ENCODE measurements at regions of chr22 and their contacts with region 1.

Region 1: GRCh38 chr22:37260901-37261336 is 16.9 kb upstream of the RAC2 start:
- DNase-seq: no peak
- H3K4me3 ChIP-seq: no peak overlapping the region
- CTCF ChIP-seq: peak; percentile 92

Region 2: DNA sequence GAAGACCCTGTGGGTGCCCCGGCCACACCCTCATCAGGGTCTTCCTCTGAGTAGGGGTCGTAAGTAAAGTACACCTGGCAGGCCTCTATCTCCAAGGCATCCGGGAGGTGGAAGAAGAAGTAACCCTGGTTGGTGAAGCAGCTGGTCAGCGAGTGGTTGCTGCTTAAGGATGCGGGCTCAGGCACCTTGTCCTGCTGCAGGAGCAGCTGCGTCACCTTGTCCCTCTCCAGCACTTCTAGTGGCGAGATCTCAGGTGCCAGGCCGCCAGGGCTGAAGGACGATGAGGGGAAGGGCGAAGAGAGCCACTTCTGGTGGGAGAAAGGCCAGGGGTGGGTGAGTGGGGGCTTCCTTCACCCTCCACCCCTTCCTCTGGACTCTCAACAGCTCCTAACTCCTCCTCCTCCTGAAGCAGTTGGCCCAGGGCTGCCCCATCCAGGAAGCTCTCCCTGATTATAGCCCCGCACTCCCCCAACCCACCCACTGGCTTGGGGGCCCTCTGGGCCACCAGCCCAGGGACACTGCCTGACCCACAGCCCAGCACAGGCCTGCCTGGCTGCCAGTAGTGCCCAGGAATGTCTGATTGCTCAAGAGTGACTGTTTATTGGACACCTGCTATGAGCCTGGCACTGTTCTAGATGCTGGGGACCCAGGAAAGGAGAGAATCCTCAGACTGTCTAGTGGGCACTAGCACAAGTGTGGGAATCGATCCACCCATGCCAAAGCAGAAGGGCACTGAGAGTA is 132.2 kb before region 1 on chr22:
- CTCF ChIA-PET with region 1: no interaction called
- POLR2A ChIA-PET with region 1: no interaction called
- DNase-seq: no peak
- H3K4me3 ChIP-seq: no peak overlapping the region
- CTCF ChIP-seq: no peak

Region 3: DNA sequence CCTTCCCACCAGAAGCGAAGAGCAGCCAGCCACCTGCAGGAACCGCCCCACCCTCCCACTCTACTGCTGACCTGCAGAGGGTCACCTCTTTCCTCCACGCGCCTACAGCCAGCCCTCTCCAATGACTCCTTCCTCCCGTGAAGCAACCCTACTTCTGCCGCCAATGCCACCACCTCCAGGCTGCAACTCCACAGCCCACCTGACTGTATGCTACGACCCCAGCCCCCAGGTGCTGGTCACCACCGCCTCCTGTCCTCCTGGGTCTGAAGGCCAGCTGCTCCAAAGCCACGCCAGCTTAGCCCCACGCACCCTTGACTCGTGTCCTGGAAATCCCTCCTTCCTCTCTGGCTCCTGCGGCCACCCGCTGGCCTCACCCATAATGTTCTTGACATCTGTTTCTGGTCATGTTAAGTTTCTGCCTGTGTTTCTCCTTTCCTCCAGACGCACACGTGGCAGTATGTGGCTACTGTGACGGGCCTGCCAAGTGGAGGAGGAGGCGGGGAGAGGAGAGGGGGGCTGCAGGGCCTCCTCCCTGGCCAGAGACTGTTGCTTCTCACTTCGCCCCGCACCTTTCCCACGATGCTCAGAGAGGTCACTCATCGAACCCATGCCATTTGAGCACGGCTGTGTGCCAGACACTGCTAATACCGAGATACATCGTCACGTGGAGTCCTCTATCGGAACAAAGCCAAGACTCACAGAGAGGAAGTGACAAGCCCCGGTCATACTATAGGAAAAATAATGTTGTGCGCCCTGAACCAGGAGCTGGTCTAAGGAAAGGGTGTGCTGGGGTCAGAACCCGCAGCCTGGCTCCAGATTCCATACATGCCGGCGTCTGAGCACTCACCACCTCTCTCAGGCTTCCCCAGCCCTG is 84.5 kb before region 1 on chr22:
- CTCF ChIA-PET with region 1: interaction called, 16 read pairs
- POLR2A ChIA-PET with region 1: no interaction called
- DNase-seq: no peak
- H3K4me3 ChIP-seq: no peak overlapping the region; the same call in none of the 2 replicates
- CTCF ChIP-seq: peak; percentile 14

Region 4: DNA sequence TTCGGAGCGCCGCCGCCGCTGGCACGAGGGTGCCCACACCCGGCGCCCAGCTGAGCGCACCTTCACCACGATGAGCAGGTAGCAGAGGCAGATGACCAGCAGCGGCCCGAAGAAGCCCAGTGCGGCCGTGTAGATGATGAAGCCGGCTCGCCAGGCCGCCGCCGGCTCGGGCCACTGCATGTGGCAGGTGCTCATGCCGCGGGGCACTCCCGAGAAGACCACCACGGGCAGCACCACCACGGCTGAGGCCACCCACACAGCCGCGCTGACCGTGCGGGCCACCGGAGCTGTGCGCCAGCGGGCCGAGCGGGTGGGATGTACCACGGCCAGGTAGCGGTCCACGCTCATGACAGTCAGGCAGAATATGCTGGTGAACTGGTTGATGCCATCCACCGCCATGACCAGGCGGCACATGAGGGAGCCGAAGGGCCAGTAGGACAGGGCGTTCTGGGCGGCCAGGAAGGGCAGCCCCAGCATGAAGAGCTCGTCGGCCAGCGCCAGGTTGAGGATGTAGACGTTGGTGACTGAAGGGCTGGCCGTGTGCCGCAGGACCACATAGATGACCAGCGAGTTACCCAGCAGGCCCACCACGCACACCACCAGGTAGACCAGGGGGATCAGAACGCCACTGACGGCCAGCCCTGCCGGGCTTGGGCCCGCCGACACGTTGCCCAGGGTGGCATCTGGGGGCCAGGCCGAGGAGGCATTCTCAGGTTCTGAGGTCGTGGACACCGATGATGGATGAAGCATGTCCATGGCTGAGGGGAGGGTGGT is 53.7 kb before region 1 on chr22:
- CTCF ChIA-PET with region 1: interaction called, 11 read pairs
- POLR2A ChIA-PET with region 1: no interaction called
- DNase-seq: no peak
- H3K4me3 ChIP-seq: no peak overlapping the region
- CTCF ChIP-seq: no peak

Region 5: DNA sequence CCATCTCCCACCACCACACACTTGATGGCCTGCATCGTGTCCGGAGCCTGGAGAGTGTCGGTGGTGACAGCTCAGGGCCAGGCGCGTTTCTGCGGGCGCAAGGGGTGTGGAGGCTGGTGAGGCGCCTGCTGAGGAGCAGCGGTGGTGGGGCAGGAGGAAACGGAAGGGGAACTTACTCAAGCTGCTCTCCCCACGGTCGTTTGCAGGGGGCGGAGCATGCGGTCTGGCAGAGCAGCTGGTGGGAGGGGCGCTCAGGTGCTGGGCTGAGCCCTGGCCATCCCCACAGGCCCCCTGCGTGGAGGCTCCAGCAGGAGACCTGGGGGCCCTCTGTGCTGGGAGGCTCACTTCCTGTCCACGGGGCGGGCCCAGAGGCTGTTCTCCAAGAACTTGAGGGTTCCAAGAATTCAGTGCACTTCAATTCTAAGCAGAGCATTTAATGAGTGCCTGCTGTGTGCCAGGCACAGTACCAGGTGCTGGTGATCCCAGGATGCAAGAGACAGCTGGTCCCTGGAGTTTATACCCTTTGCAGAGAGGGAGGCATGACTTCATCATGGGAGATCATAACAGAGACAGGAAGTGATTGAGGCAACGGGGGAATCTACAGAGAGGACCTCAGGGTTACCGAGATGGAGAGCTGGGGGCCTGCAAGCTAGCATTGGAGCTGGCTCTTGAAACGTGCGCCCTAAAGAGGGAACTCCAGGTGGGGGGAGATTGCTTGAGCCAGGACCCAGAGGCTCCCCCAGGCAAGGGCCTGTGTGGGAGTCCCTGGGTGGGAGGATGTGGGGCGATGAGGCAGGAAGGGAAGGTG is 16.6 kb before region 1 on chr22 and contains the start of gene RAC2:
- CTCF ChIA-PET with region 1: interaction called, 162 read pairs
- POLR2A ChIA-PET with region 1: no interaction called
- DNase-seq: no peak
- H3K4me3 ChIP-seq: peak within 1 kb of the TSS; percentile 60
- CTCF ChIP-seq: no peak

Region 6: GRCh38 chr22:37295213-37295886 is 34.4 kb after region 1 on chr22:
- CTCF ChIA-PET with region 1: interaction called, 16 read pairs
- POLR2A ChIA-PET with region 1: no interaction called
- DNase-seq: no peak
- H3K4me3 ChIP-seq: no peak overlapping the region
- CTCF ChIP-seq: no peak

Region 7: GRCh38 chr22:37309211-37310074 is 48.5 kb after region 1 on chr22:
- CTCF ChIA-PET with region 1: interaction called, 17 read pairs
- POLR2A ChIA-PET with region 1: no interaction called
- DNase-seq: no peak
- H3K4me3 ChIP-seq: no peak overlapping the region
- CTCF ChIP-seq: no peak

Region 8: GRCh38 chr22:37370306-37370979 is 109.5 kb after region 1 on chr22:
- CTCF ChIA-PET with region 1: no interaction called
- POLR2A ChIA-PET with region 1: no interaction called
- DNase-seq: no peak
- H3K4me3 ChIP-seq: no peak overlapping the region
- CTCF ChIP-seq: no peak

Region 9: DNA sequence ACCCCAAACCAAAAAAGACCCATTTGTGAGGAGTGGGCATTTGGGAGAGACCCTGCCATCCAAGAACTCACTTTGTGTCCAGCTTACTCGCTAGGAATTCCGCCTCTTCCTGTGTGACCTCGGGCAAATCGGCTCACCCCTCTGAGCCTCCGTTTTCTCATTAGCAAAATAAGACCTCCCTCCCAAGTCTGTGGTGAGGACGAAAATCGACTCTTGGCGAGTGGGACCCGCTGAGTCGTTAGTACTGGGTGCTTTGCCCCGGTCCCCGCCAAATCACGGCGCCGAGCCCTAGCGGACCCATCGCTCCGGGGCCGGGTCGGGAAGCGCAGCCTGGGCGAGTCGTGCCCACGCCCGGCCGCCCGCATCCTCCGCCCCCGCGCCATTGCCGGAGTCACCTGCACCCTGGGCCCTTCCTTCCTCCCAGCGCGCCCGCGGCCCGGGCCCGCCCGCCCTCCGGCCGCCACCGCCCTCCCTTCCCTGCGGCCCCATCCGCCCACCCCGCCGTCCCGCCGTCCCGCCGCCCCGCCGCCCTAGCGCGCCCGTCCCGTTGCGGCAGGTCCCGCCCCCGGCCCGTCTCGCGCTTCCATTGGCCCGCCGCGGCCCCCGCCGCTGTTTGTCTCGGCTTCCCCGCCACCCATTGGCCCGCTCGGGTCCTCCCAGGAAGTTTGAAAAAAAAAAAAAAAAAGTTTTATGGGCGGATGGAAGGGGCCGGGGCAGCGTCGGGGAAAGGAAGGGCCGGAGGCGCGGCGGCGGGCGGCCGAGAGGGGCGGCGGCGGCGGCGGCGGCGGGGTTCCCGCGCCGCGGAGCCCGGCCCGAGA is 484.8 kb after region 1 on chr22:
- CTCF ChIA-PET with region 1: no interaction called
- POLR2A ChIA-PET with region 1: no interaction called
- DNase-seq: peak; percentile 17
- H3K4me3 ChIP-seq: peak overlapping the region; percentile 85
- CTCF ChIP-seq: no peak

Measured in AG04449 (cell line).